Caco-2 (cell line): ENCODE measurements at regions of chr2 and their contacts with region 1.

Region 1: DNA sequence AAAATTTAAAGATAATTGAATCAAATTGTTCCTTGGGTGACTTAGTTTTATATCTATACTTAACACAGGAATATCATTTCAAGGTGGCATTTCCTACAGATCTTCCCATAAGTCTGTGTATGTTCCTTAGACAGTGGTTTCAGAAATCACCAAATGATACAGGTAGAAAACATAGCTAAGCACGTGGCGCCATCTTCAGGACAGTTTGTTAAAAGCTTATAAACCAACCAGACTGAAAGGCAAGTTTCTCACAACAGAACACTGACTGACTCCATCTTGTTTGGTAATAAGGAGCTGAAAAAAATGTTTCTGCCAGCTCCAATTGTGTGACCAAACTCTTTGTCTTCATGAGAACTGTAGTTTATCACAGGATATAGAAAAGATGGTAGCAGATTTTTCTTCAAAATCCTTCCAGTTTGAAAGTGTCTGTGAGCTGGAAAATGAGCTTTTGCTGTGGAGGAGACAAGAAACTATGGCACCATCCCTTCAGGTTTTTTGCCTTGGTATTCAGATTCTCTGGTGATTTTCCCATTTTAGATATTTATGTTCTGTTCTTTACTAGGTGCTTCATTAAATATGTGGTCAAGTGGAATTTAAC is 34.8 kb upstream of the NEUROD1 start:
- DNase-seq: peak; percentile 63 to 75
- H3K4me3 ChIP-seq: no peak overlapping the region
- H3K4me3 Mint-ChIP-seq: no peak overlapping the region
- H3K27ac Mint-ChIP-seq: no peak overlapping the region
- H3K4me1 ChIP-seq: no peaks in the 10 kb centered on the region
- H3K4me1 Mint-ChIP-seq: no peaks in the 10 kb centered on the region
- H3K27me3 ChIP-seq: no peaks in the 10 kb centered on the region
- H3K27me3 Mint-ChIP-seq: peaks cover 3% of the 10 kb centered on the region
- CTCF ChIP-seq: peak; percentile 67 to 84

Region 2: DNA sequence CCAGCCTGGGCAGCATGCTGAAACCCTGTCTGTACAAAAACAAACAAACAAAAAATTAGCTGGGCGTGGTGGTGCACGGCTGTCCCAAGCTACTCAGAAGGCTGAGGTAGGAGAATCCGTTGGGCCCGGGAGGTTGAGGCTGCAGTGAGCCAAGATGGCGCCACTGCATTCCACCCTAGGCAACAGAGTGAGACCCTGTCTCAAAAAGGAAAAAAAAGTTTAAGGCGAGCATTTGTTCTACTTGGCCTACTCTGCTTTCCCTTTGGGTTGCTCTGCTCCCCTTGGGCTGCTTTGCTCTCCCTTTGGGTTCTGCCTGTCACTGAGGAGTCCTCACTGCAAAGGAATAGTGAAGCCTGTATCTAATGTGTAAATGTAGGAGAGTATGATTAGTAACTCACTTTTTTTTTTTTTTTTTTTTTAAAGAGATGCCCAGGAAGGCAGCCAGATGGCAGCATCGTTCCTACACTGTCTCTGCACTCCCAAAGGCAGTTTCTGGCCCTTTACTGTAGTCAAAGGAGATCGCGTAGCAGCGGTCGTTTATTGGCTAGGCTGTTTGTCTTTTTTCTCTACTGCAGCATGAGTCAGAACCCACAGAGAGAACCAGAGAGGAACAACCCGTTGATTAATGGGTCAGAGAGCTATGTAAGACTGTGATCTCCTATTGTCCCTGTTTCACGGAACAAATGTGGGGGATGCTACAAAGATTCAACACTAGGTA is 1589.7 kb before region 1 on chr2:
- CTCF ChIA-PET with region 1: interaction called, 3 read pairs
- POLR2A ChIA-PET with region 1: no interaction called
- intact Hi-C with region 1: loop called (anchors 2 kb)
- DNase-seq: peak; percentile 65 to 72
- H3K4me3 ChIP-seq: no peak overlapping the region
- H3K4me3 Mint-ChIP-seq: no peak overlapping the region
- H3K27ac Mint-ChIP-seq: no peak overlapping the region
- H3K4me1 ChIP-seq: no peaks in the 10 kb centered on the region
- H3K4me1 Mint-ChIP-seq: no peaks in the 10 kb centered on the region
- H3K27me3 ChIP-seq: no peaks in the 10 kb centered on the region
- H3K27me3 Mint-ChIP-seq: peaks cover 6% of the 10 kb centered on the region
- CTCF ChIP-seq: peak; percentile 45 to 76

Region 3: GRCh38 chr2:181104512-181105115 is 610.5 kb before region 1 on chr2:
- CTCF ChIA-PET with region 1: interaction called, 7 read pairs
- POLR2A ChIA-PET with region 1: no interaction called
- intact Hi-C with region 1: loop called (anchors 1 kb)
- DNase-seq: peak in 1 of 2 experiments; percentile 16
- H3K4me3 ChIP-seq: no peak overlapping the region
- H3K4me3 Mint-ChIP-seq: no peak overlapping the region
- H3K27ac Mint-ChIP-seq: no peak overlapping the region
- H3K4me1 ChIP-seq: no peaks in the 10 kb centered on the region
- H3K4me1 Mint-ChIP-seq: no peaks in the 10 kb centered on the region
- H3K27me3 ChIP-seq: no peaks in the 10 kb centered on the region
- H3K27me3 Mint-ChIP-seq: peaks cover 6% of the 10 kb centered on the region
- CTCF ChIP-seq: peak; percentile 57 to 58

Region 4: GRCh38 chr2:181430406-181431118 is 284.6 kb before region 1 on chr2:
- CTCF ChIA-PET with region 1: no interaction called
- POLR2A ChIA-PET with region 1: no interaction called
- intact Hi-C with region 1: loop called (anchors 1 kb)
- DNase-seq: no peak
- H3K4me3 ChIP-seq: no peak overlapping the region
- H3K4me3 Mint-ChIP-seq: no peak overlapping the region
- H3K27ac Mint-ChIP-seq: no peak overlapping the region
- H3K4me1 ChIP-seq: no peaks in the 10 kb centered on the region
- H3K4me1 Mint-ChIP-seq: no peaks in the 10 kb centered on the region
- H3K27me3 ChIP-seq: no peaks in the 10 kb centered on the region
- H3K27me3 Mint-ChIP-seq: no peaks in the 10 kb centered on the region
- CTCF ChIP-seq: peak in 1 of 2 experiments; percentile 15

Region 5: DNA sequence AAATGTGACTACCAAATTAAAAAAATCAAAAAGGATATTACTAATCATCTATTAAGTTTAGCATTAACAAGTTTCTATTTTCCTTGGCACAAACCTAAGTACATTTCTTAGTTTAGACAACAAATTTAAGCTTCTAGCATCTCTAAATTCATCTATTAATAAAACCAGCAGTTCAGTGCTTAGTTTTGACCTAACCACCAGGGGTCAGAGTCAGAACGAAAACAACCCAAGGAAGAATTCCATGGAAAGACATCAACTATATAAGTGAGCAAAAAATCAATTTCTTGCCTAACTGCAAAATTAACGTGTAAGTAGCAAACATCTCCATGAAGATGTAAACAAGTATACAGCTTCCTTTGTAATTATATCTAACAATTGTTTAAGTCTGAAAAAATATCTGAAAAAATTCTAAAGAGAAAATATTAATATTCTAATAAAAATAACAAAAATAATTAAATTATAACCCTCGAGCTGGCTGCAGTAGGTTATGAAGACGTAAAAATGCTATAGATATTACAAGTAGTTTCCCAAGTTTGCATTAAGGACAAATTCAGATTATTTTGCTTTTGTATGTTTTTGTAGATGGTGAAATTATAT is 141.9 kb before region 1 on chr2:
- CTCF ChIA-PET with region 1: interaction called, 38 read pairs
- POLR2A ChIA-PET with region 1: no interaction called
- intact Hi-C with region 1: loop called (anchors 1 kb)
- DNase-seq: peak in 1 of 2 experiments; percentile 49
- H3K4me3 ChIP-seq: no peak overlapping the region
- H3K4me3 Mint-ChIP-seq: no peak overlapping the region
- H3K27ac Mint-ChIP-seq: no peak overlapping the region
- H3K4me1 ChIP-seq: no peaks in the 10 kb centered on the region
- H3K4me1 Mint-ChIP-seq: no peaks in the 10 kb centered on the region
- H3K27me3 ChIP-seq: no peaks in the 10 kb centered on the region
- H3K27me3 Mint-ChIP-seq: peaks cover 4% of the 10 kb centered on the region
- CTCF ChIP-seq: peak in 1 of 2 experiments; percentile 63

Region 6: GRCh38 chr2:181697571-181697970 is 17.6 kb before region 1 on chr2:
- CTCF ChIA-PET with region 1: no interaction called
- POLR2A ChIA-PET with region 1: no interaction called
- intact Hi-C with region 1: no loop called
- DNase-seq: no peak
- H3K4me3 ChIP-seq: no peak overlapping the region
- H3K4me3 Mint-ChIP-seq: no peak overlapping the region
- H3K27ac Mint-ChIP-seq: no peak overlapping the region
- H3K4me1 ChIP-seq: no peaks in the 10 kb centered on the region
- H3K4me1 Mint-ChIP-seq: no peaks in the 10 kb centered on the region
- H3K27me3 ChIP-seq: no peaks in the 10 kb centered on the region
- H3K27me3 Mint-ChIP-seq: no peaks in the 10 kb centered on the region
- CTCF ChIP-seq: no peak

Region 7: GRCh38 chr2:182191061-182191460 is 475.9 kb after region 1 on chr2:
- CTCF ChIA-PET with region 1: no interaction called
- POLR2A ChIA-PET with region 1: no interaction called
- intact Hi-C with region 1: no loop called
- DNase-seq: no peak
- H3K4me3 ChIP-seq: no peak overlapping the region
- H3K4me3 Mint-ChIP-seq: no peak overlapping the region
- H3K27ac Mint-ChIP-seq: no peak overlapping the region
- H3K4me1 ChIP-seq: no peaks in the 10 kb centered on the region
- H3K4me1 Mint-ChIP-seq: no peaks in the 10 kb centered on the region
- H3K27me3 ChIP-seq: no peaks in the 10 kb centered on the region
- H3K27me3 Mint-ChIP-seq: peaks cover 2% of the 10 kb centered on the region
- CTCF ChIP-seq: no peak

Region 8: DNA sequence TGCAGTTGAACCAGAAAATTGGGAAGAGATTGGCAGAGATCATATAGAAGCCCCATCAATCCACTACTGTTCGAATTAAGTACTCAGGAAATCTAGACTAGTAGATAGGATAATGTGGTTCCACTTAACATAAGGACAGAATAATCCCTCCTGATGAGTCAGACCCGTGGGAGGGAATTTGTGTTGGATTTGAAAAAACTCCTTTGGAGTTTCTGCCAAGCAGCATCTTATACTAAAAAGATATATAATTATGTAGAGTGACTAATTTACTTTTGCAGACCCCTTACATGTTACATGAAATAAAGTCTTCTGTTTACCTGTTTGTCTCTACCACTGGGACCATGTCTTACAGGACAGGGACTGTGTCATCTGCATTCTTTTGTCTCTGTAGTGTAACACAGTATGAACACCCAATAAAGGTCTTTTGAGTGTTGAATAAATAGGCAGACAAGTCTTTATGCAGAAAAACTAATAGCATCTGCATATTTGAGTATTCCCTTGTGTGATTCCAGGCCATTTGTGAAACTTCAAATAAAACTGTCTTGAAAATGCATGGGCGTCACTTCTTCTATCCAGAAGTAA is 878.4 kb after region 1 on chr2:
- CTCF ChIA-PET with region 1: no interaction called
- POLR2A ChIA-PET with region 1: no interaction called
- intact Hi-C with region 1: no loop called
- DNase-seq: no peak
- H3K4me3 ChIP-seq: no peak overlapping the region
- H3K4me3 Mint-ChIP-seq: no peak overlapping the region
- H3K27ac Mint-ChIP-seq: no peak overlapping the region
- H3K4me1 ChIP-seq: peaks cover 5% of the 10 kb centered on the region
- H3K4me1 Mint-ChIP-seq: peaks cover 9% of the 10 kb centered on the region
- H3K27me3 ChIP-seq: no peaks in the 10 kb centered on the region
- H3K27me3 Mint-ChIP-seq: peaks cover 8% of the 10 kb centered on the region
- CTCF ChIP-seq: no peak